Ovary (tissue), 10 donors: ENCODE measurements at regions of chr6 and their contacts with region 1.

Region 1: DNA sequence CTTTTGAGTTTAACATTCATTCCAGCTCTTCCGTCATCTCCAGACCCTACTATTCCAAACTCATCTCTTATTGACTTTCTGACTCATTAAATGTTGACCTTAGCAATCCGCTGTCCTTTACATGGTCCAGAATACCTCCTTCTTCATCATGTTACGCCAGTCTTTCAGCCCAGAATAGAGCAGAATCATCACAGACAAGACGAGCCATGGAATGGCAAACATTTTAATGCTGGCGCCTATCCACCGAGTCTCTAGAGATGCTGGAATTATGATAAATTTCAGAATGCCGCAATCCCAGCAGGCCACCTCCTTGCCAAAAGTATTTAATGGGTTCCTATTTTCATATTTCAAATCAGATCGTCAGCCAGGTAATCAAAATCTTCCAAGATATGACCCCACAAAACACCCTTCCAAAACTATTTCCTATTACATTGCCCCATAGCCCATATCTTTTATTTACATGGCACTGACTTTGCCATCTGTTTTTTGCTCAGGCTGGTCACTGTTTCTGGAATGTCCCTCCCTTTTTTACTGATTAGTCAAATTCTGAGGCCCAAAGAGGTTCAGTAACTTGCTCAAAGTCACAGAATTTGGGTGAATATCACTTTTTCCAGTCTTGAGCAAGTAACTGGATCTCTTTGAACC is 41.0 kb downstream of the NHLRC1 start:
- DNase-seq: no peak
- H3K4me3 ChIP-seq: no peak overlapping the region
- H3K27ac ChIP-seq: no peak overlapping the region
- H3K4me1 ChIP-seq: no peaks in the 10 kb centered on the region
- H3K27me3 ChIP-seq: no peaks in the 10 kb centered on the region
- CTCF ChIP-seq: no peak
- EP300 ChIP-seq: no peak
- POLR2A ChIP-seq: no peak

Region 2: DNA sequence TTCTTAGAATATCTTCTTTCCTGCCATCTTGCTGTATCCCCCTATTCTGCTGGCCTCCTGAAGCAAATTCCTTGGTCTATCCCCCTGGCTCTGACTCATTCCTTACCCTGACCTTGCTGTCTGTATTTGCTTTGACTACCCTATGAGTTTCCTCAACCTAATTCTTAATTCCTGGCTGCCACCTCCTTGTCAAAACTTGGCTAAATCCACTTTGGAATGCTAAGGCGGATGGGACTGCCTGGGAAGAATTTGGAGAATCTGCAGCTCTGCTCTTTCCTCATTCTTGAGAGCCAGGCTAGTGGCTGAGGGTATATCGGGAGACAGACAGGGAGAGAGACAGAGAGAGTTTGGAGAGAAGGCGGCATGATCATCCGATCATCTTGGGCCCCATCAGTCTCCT is 663.7 kb before region 1 on chr6:
- intact Hi-C with region 1: no loop called
- DNase-seq: no peak
- H3K4me3 ChIP-seq: no peak overlapping the region
- H3K27ac ChIP-seq: no peak overlapping the region
- H3K4me1 ChIP-seq: peaks cover 1% of the 10 kb centered on the region
- H3K27me3 ChIP-seq: no peaks in the 10 kb centered on the region
- CTCF ChIP-seq: no peak
- EP300 ChIP-seq: no peak
- POLR2A ChIP-seq: no peak

Region 3: GRCh38 chr6:18031680-18032256 is 49.7 kb before region 1 on chr6:
- intact Hi-C with region 1: loop called in 1 of 4 experiments (anchors 2 kb)
- DNase-seq: no peak
- H3K4me3 ChIP-seq: no peak overlapping the region
- H3K27ac ChIP-seq: no peak overlapping the region
- H3K4me1 ChIP-seq: no peaks in the 10 kb centered on the region
- H3K27me3 ChIP-seq: no peaks in the 10 kb centered on the region
- CTCF ChIP-seq: no peak
- EP300 ChIP-seq: no peak
- POLR2A ChIP-seq: no peak